Mammary epithelial cell (primary cell): ENCODE measurements at regions of chr17 and their contacts with region 1.

Region 1: DNA sequence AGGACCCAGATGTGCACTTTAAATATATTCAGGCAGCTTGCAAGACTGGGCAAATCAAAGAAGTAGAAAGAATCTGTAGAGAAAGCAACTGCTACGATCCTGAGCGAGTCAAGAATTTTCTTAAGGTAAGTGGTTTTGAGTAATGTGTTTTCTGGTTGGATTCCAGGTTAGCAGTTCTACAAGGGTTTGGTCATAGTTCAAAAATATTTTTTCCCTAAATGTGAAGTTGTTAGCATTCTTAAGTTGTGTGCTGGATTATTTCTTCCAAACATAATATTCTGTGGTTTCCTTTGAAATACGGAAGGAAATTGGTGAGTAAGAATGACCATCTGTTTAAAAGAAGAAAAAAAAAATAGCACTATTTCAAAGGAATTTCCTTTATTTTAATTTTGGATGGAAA is 38.4 kb downstream of the PTRH2 start:
- DNase-seq: peak; percentile 81
- H3K4me3 ChIP-seq: peak overlapping the region in 1 of 3 experiments; percentile 19
- H3K27ac ChIP-seq: peak overlapping the region; percentile 46
- H3K4me1 ChIP-seq: peaks cover 49% of the 10 kb centered on the region
- H3K27me3 ChIP-seq: no peaks in the 10 kb centered on the region
- CTCF ChIP-seq: no peak

Region 2: DNA sequence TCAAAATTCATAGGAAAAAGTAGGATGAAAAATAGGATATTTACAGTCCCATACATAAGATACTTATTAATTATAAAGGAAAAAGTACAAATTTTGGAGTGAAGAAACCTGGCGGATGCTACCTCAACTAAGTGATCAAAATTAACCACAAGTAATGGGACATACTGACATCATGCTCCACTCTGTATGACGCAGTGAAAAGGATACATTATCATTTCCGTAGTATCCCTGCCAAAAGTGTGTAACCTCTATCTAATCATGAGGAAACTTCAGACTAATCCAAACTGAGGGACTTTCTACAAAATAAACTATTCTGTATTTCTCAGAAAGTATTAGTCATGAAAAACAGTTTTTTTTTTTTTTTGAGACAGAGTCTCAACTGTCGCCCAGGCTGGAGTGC is 622.6 kb before region 1 on chr17:
- CTCF ChIA-PET with region 1: no interaction called
- dilution Hi-C with region 1: no loop called
- in situ Hi-C with region 1: no loop called
- intact Hi-C with region 1: no loop called
- DNase-seq: no peak
- H3K4me3 ChIP-seq: no peak overlapping the region
- H3K27ac ChIP-seq: no peak overlapping the region
- H3K4me1 ChIP-seq: no peaks in the 10 kb centered on the region
- H3K27me3 ChIP-seq: no peaks in the 10 kb centered on the region
- CTCF ChIP-seq: no peak

Region 3: DNA sequence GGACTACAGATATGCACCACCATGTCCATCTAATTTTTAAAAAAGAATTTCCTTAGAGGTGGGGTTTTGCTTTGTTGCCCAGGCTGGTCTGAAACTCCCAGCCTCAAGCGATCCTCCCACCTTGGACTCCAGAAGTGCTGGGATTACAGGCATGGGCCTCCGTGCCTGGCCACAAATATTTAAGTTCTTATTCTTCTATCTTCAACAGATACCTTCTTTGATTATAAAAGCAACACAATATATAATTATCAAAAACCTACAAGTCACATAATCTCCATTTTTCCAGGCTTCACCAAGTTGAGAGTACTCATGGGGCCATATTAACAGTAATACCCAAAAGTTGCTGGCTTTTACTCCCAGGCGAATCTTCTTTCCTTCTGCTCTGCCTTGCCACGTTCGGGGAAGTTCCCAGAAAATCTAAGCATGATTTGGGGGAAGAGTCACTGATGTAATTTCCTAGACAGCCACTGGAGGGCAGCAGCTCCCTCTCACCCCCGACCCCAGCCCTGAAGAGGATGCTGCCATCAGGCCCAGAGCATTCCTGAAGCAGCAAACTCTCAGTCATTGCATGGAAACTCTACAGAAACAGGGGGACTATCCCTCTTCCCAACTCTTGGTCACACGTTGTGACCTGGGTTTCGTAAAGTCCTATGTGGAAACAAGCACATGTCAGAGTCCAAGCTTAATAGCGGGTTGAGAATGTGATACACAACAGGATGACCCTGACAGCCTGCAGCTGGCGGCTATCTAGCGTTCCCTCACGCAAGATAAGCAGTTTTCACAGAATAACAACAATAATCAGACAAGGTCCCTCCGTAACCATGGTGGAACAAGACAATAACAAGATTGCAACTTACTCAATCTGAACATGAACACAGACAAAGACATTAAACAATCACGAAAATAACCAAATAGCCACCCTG is 147.4 kb before region 1 on chr17:
- CTCF ChIA-PET with region 1: no interaction called
- dilution Hi-C with region 1: no loop called
- in situ Hi-C with region 1: no loop called
- intact Hi-C with region 1: loop called (anchors 2 kb)
- DNase-seq: peak; percentile 56
- H3K4me3 ChIP-seq: no peak overlapping the region
- H3K27ac ChIP-seq: no peak overlapping the region
- H3K4me1 ChIP-seq: no peaks in the 10 kb centered on the region
- H3K27me3 ChIP-seq: no peaks in the 10 kb centered on the region
- CTCF ChIP-seq: peak; percentile 88 to 91

Region 4: GRCh38 chr17:59619293-59620063 is 49.3 kb before region 1 on chr17 and contains the start of gene CLTC:
- CTCF ChIA-PET with region 1: no interaction called
- dilution Hi-C with region 1: no loop called
- in situ Hi-C with region 1: no loop called
- intact Hi-C with region 1: loop called (anchors 5 kb)
- DNase-seq: peak; percentile 97
- H3K4me3 ChIP-seq: peak within 1 kb of the TSS; percentile 83 to 97 (median 96)
- H3K27ac ChIP-seq: peak within 1 kb of the TSS; percentile 97
- H3K4me1 ChIP-seq: peaks cover 13% of the 10 kb centered on the region
- H3K27me3 ChIP-seq: no peaks in the 10 kb centered on the region
- CTCF ChIP-seq: no peak
- total RNA-seq, gene CLTC: 266 to 356 TPM

Region 5: GRCh38 chr17:59627770-59628171 is 41.0 kb before region 1 on chr17:
- CTCF ChIA-PET with region 1: no interaction called
- dilution Hi-C with region 1: loop called (anchors 5 kb)
- in situ Hi-C with region 1: no loop called
- intact Hi-C with region 1: loop called (anchors 5 kb)
- DNase-seq: no peak
- H3K4me3 ChIP-seq: no peak overlapping the region
- H3K27ac ChIP-seq: no peak overlapping the region
- H3K4me1 ChIP-seq: no peaks in the 10 kb centered on the region
- H3K27me3 ChIP-seq: no peaks in the 10 kb centered on the region
- CTCF ChIP-seq: no peak

Region 6: DNA sequence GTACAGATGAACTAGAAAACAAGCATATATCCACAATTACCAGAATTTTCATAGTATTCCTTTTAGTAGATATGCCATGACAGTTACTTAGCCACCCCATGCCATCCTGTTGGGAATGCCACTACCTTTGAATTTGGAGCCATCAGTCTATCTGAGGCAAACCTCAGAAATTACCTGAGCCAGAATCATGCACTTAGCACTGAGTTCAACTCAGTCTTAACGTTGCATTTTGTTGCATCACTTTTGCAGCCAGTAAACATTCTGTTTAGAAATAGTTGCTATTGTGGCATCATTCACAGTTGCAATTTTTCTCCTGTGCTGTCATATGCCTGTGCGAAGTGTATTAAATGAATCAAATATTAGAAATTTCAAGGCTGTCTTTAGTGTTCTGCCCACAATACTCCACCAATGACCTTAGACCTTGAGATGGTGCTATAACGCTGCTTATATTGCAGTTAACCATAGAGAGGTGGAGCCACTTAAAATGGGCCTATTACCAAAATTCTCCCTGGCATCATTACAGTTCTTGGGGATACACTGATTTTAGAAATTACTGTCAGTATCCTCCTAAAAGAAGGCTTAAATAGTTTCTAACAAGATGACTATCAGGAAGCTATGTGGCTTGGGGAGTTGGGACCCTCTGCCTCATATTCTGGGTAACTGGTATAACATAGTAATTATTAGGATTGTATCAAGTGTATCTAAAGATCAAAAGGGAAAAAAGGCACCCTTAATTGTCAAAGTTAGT is 27.3 kb after region 1 on chr17:
- CTCF ChIA-PET with region 1: no interaction called
- dilution Hi-C with region 1: no loop called
- in situ Hi-C with region 1: no loop called
- intact Hi-C with region 1: loop called (anchors 5 kb)
- DNase-seq: no peak
- H3K4me3 ChIP-seq: no peak overlapping the region
- H3K27ac ChIP-seq: no peak overlapping the region
- H3K4me1 ChIP-seq: no peaks in the 10 kb centered on the region
- H3K27me3 ChIP-seq: no peaks in the 10 kb centered on the region
- CTCF ChIP-seq: no peak

Region 7: DNA sequence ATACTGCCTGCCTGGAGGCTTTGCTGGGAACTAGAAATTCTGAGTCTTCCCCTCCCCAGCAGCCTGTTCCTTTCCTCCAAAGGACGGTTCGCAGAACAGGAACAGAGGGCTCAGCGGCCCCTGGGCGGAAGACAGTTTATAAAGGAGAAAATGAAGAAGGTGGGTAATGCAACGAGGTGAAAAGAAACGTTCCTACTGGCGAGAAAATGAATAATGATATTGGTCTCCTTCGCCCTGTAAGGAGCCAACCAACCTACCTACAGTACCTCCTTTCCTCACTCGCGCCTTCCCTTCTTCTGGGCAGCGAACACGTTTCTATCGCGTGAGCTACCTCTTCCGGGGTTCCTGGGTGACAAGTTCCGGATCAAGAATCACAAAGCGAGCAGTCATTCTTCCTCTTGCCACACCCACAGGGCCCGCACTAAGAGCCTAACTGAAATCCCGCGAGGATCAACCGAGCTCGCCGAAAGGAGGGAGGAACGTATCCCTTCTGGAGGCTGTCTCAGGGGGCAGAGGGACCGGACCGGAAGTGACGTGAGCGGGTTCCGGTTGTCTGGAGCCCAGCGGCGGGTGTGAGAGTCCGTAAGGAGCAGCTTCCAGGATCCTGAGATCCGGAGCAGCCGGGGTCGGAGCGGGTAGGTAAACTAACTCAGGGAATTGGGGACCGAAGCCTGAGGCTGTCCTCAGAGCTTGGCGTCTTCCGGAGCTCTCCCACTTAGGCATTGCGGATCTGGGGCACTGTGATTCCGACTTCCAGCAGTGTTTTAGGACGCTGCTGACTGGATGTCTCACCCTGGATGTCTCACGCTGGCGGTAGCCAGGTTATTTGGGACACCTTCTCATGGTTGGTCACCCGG is 38.5 kb after region 1 on chr17 and contains the starts of genes PTRH2 and VMP1:
- CTCF ChIA-PET with region 1: no interaction called
- dilution Hi-C with region 1: no loop called
- in situ Hi-C with region 1: no loop called
- intact Hi-C with region 1: no loop called
- DNase-seq: peak; percentile 100
- H3K4me3 ChIP-seq: peak within 1 kb of the TSS; percentile 83 to 95 (median 88)
- H3K27ac ChIP-seq: peak within 1 kb of the TSS; percentile 97
- H3K4me1 ChIP-seq: peaks cover 15% of the 10 kb centered on the region
- H3K27me3 ChIP-seq: no peaks in the 10 kb centered on the region
- CTCF ChIP-seq: no peak
- total RNA-seq, gene PTRH2: 23.0 to 37.4 TPM
- total RNA-seq, gene VMP1: 177 to 211 TPM

Region 8: DNA sequence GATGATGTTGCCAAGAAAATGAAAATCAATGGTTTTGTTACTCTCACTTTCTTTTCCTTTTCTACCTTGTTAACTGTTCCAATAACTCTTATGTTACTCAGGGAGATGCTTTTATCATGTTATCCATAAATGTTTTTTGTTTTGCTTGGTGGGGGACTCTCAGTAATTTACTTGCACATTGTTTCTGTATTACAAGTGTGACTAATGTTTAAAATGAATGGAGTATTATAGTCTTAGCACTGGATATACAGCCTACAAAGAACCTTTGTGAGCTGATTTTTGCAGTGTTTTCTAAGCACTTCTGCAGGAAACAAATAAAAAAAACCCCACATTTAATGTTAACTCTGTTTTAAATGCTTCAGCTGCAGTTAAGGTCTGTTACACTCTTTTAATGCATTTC is 50.7 kb after region 1 on chr17:
- CTCF ChIA-PET with region 1: no interaction called
- dilution Hi-C with region 1: no loop called
- in situ Hi-C with region 1: no loop called
- intact Hi-C with region 1: no loop called
- DNase-seq: no peak
- H3K4me3 ChIP-seq: no peak overlapping the region
- H3K27ac ChIP-seq: no peak overlapping the region
- H3K4me1 ChIP-seq: no peaks in the 10 kb centered on the region
- H3K27me3 ChIP-seq: no peaks in the 10 kb centered on the region
- CTCF ChIP-seq: no peak